ENCODE measurements at regions of chr5 and their contacts with region 1.

Region 1: DNA sequence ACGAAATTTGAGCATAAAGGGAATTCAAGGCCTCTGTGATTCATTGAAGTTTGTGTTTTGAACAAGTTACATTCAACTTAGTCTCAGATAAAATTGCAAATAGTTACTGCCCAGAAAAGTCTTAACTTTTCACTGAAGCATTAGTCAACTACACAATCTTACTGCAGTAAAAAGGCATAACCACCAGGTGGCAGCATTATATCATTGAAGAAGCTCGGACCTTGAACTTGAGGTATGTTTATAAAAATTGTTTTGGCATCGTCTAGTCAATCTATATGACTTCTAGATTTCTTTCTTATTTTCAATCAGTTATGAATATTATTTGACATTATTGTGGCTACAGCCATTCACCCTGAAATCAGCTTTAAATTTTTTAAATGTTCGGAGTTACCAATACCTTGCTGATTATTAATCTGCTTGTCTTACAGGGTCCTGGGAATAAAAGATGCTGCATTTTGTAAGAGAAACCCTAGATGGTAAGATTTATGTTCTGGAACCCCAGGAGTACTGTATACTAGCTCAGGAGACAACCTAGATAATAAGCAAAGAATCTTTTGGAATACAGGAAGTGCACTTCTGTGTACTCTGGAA is 83.9 kb upstream of the GRAMD2B start:
- DNase-seq: peak; percentile 61 to 83 (median 75)
- H3K4me3 ChIP-seq: no peak overlapping the region
- H3K27ac ChIP-seq: no peak overlapping the region
- H3K4me1 ChIP-seq: no peaks in the 10 kb centered on the region
- H3K27me3 ChIP-seq: peaks cover 0 to 5% (median 0%) of the 10 kb centered on the region in 5 experiments

Region 2: DNA sequence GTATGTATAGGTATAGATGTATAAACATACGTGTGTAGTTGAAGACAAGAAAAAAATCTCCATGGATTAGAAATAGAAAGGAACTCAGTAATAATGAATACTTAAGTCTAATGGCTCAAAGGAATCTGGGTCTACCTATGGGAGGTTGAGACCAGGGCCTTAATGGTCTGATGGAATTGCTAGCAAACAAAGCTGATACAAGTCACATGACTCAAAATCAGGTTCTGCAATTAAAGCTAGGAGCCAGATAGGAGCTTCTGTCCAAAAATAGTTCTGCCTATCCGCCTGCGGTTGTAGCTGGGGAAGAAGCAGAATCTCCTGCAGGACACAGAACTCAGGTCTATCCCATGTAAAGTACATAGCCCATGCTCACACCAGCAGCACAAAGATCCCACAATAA is 19.9 kb before region 1 on chr5:
- CTCF ChIA-PET with region 1: no interaction called
- POLR2A ChIA-PET with region 1: no interaction called
- DNase-seq: no peak
- H3K4me3 ChIP-seq: no peak overlapping the region
- H3K27ac ChIP-seq: no peak overlapping the region
- H3K4me1 ChIP-seq: no peaks in the 10 kb centered on the region
- H3K27me3 ChIP-seq: peaks cover 0 to 2% (median 0%) of the 10 kb centered on the region in 5 experiments

Region 3: DNA sequence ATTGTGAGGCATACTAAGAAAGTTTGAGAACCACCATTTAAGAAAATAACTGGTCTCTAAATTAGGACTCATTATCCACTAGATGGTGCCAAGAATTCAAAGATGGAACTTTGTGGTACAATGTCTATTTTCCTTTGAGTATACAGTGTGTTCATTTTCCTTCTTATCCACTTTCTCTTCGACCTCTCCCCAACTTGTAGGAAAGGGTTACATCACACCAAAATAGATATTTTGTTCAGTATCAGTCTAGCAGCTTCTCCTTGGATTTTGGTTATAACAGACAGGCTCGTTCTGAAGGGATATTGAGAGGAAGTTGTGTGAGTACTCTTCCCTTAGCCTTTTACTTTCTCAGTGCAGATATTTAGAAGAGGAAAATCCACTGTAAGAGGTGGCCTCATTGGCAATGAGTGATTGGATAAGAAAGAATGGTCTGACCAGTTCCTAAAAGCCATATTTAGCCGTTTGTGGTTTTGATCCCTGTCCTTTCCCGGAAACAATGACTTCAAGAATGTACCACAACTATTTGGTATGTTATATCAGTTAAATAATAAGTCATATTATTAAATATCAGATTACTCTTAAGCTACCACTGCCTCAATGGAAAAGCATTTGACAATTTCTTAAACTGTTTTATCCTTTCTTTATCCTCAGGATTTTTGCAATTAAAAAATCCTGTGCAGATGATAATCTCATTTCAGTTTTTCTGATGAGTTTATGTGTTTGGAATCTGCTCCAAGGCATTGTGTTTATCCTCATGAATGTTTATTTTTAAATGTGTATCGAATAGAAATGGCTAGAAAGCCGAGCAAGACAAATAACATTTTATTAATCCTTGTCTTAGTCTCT is 14.9 kb after region 1 on chr5:
- CTCF ChIA-PET with region 1: interaction called, 24 read pairs
- POLR2A ChIA-PET with region 1: no interaction called
- DNase-seq: peak; percentile 38 to 62 (median 60)
- H3K4me3 ChIP-seq: peak overlapping the region in 6 of 7 experiments; percentile 15 to 72 (median 44)
- H3K27ac ChIP-seq: peak overlapping the region in 1 of 2 experiments; percentile 9
- H3K4me1 ChIP-seq: peaks cover 0 to 30% (median 5%) of the 10 kb centered on the region in 4 experiments
- H3K27me3 ChIP-seq: peaks cover 0 to 6% (median 0%) of the 10 kb centered on the region in 5 experiments

Region 4: GRCh38 chr5:126538579-126538978 is 199.3 kb after region 1 on chr5:
- CTCF ChIA-PET with region 1: interaction called, 22 read pairs
- POLR2A ChIA-PET with region 1: no interaction called
- DNase-seq: no peak
- H3K4me3 ChIP-seq: peak overlapping the region in 1 of 7 experiments; percentile 36
- H3K27ac ChIP-seq: no peak overlapping the region
- H3K4me1 ChIP-seq: peaks cover 3 to 7% (median 4%) of the 10 kb centered on the region in 4 experiments
- H3K27me3 ChIP-seq: no peaks in the 10 kb centered on the region

Region 5: GRCh38 chr5:126544087-126544740 is 204.9 kb after region 1 on chr5:
- CTCF ChIA-PET with region 1: interaction called, 14 read pairs
- POLR2A ChIA-PET with region 1: no interaction called
- DNase-seq: peak; percentile 37 to 67 (median 60)
- H3K4me3 ChIP-seq: no peak overlapping the region
- H3K27ac ChIP-seq: no peak overlapping the region
- H3K4me1 ChIP-seq: peaks cover 0 to 3% (median 1%) of the 10 kb centered on the region in 4 experiments
- H3K27me3 ChIP-seq: no peaks in the 10 kb centered on the region

Measured in common myeloid progenitor, CD34-positive (primary cell).